ENCODE measurements at regions of chr10 and their contacts with region 1.

Region 1: GRCh38 chr10:102394079-102394800 is 1.3 kb upstream of the NFKB2 start:
- DNase-seq: peak; percentile 97
- H3K4me3 ChIP-seq: peak overlapping the region; percentile 57 to 85 (median 62)
- H3K27ac ChIP-seq: peak overlapping the region; percentile 94 to 99 (median 98)
- H3K4me1 ChIP-seq: peaks cover 12 to 39% (median 28%) of the 10 kb centered on the region in 4 donors
- H3K27me3 ChIP-seq: no peaks in the 10 kb centered on the region
- CTCF ChIP-seq: peak in 4 of 5 experiments; percentile 4 to 99 (median 98)
- EP300 ChIP-seq: peak; percentile 50
- POLR2A ChIP-seq: peak; percentile 85

Region 2: GRCh38 chr10:102420810-102421644 is 26.8 kb after region 1 on chr10 and contains the start of gene FBXL15:
- in situ Hi-C with region 1: no loop called
- intact Hi-C with region 1: loop called (anchors 1 kb)
- DNase-seq: peak; percentile 98
- H3K4me3 ChIP-seq: peak within 1 kb of the TSS; percentile 45 to 77 (median 64)
- H3K27ac ChIP-seq: peak within 1 kb of the TSS; percentile 90 to 96 (median 94)
- H3K4me1 ChIP-seq: peaks cover 26 to 35% (median 32%) of the 10 kb centered on the region in 4 donors
- H3K27me3 ChIP-seq: peaks cover 31% of the 10 kb centered on the region
- CTCF ChIP-seq: no peak
- EP300 ChIP-seq: no peak
- POLR2A ChIP-seq: peak; percentile 47
- total RNA-seq, gene FBXL15: 16.7 to 56.3 (median 46.0) TPM

Region 3: DNA sequence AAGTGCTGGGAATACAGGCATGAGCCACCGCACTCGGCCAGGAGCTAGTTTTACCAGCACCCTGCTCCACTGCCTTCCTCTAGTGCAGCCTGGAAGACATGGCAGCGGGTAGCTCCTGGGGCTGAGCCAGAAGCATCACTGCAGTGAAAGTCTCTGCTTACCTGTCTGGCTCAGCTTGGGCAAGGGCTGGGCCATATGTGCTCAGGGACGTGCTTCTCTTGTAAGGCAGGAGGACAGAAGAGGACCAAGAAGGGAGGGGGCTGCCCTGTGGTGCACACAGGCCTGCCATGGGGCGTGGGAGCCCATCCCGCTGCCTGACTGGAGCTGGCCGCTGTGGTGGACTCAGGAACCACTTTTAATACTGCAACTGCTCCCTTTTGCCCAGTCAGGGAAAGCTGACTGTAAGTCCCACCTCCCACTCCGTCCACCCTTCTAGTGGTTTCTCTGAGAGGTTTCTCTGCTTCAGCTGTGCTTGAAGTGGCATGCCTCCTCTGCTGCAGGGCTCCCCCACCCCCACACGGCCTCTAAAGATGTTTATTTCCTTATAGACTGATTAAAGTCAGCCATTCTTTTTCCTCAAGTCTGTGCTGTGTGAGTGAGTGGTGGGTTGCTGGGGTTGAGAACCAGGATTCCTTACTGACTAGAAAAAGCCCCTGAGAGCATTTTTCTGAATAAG is 82.4 kb after region 1 on chr10:
- in situ Hi-C with region 1: no loop called
- intact Hi-C with region 1: loop called (anchors 5 kb)
- DNase-seq: no peak
- H3K4me3 ChIP-seq: no peak overlapping the region
- H3K27ac ChIP-seq: no peak overlapping the region
- H3K4me1 ChIP-seq: no peaks in the 10 kb centered on the region
- H3K27me3 ChIP-seq: no peaks in the 10 kb centered on the region
- CTCF ChIP-seq: no peak
- EP300 ChIP-seq: no peak
- POLR2A ChIP-seq: no peak

Region 4: DNA sequence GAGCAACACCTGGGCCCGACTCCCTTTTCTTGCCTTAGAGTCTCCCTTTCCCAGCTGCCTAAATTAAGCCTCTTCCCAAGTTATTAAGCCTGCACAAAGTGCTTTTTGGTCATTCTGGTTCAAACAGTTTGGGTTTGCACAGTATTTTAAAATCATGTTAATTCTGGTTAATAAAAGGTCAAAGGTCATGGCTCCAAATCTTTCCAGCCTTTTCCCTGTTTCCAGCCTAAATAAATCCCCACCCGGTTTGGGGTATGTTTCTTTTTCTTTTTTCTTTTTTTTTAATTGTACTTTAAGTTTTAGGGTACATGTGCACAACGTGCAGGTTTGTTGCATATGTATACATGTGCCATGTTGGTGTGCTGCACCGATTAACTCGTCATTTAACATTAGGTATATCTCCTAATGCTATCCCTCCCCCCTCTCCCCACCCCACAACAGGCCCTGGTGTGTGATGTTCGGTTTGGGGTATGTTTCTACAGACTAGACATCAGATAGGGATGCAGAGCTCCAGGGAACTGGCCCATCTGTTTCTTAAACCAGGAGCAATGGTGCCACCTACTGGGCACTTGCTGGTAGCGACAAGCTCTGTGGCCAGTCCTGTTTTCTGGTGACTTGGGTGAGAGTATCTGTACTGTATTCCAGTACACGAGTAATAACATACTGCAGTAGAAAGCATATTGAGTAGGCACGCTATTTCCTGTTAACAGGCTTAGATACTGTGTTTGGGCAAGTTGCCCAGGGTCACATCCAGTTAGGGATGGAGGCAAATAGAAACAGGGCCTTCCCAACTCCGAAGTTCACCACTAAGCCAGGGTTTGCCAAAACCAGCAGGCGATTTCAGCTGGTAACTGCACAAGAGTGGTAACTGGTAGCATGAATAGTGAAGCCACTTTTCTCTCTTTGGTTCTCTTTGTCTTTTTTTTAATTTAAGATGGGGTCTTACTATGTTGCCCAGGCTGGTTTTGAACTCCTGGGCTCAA is 189.5 kb after region 1 on chr10:
- in situ Hi-C with region 1: loop called in 1 of 4 experiments (anchors 25 kb)
- intact Hi-C with region 1: loop called (anchors 10 kb)
- DNase-seq: peak; percentile 86
- H3K4me3 ChIP-seq: no peak overlapping the region
- H3K27ac ChIP-seq: no peak overlapping the region
- H3K4me1 ChIP-seq: peaks cover 0 to 23% (median 0%) of the 10 kb centered on the region in 4 donors
- H3K27me3 ChIP-seq: no peaks in the 10 kb centered on the region
- CTCF ChIP-seq: peak; percentile 80 to 89 (median 83)
- EP300 ChIP-seq: no peak
- POLR2A ChIP-seq: no peak

Measured in transverse colon (tissue), 4 donors.